A673 (cell line): ENCODE measurements at regions of chr19 and their contacts with region 1.

Region 1: GRCh38 chr19:39362682-39363657 is 20.7 kb downstream of the SAMD4B start:
- DNase-seq: no peak
- H3K4me3 ChIP-seq: no peak overlapping the region
- H3K27ac ChIP-seq: peak overlapping the region; percentile 59
- H3K4me1 ChIP-seq: peaks cover 16% of the 10 kb centered on the region
- H3K27me3 ChIP-seq: no peaks in the 10 kb centered on the region
- CTCF ChIP-seq: no peak

Region 2: DNA sequence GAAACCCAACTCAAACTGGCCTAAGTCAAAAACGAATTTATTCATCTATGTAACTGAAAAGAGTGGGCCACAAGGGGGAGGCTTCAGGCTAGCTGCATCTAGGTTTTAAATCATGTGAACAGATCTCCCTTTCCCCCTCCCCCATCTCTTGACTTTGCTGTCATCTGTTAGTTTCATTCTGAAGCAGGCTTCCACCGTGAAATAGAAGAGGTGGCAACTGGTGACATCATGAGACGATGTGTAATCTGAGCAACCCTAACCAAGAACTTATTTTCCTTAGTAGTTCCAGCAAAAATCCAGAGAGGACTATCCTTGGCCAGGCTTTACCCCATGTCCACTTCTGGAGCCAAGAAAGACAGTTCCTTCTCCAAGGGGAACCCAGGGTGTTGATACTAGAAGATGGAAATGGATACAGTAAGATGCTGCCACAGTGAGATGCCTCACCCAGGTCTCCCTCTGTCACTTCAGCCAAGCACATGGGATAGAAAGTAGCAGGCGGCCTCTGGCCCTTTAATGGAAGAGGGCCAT is 11.4 kb before region 1 on chr19:
- CTCF ChIA-PET with region 1: no interaction called
- POLR2A ChIA-PET with region 1: no interaction called
- intact Hi-C with region 1: no loop called
- DNase-seq: no peak
- H3K4me3 ChIP-seq: no peak overlapping the region
- H3K27ac ChIP-seq: no peak overlapping the region
- H3K4me1 ChIP-seq: peaks cover 11% of the 10 kb centered on the region
- H3K27me3 ChIP-seq: no peaks in the 10 kb centered on the region
- CTCF ChIP-seq: no peak

Region 3: GRCh38 chr19:39524495-39524894 is 161.5 kb after region 1 on chr19:
- CTCF ChIA-PET with region 1: interaction called, 12 read pairs
- POLR2A ChIA-PET with region 1: no interaction called
- intact Hi-C with region 1: no loop called
- DNase-seq: no peak
- H3K4me3 ChIP-seq: no peak overlapping the region
- H3K27ac ChIP-seq: no peak overlapping the region
- H3K4me1 ChIP-seq: no peaks in the 10 kb centered on the region
- H3K27me3 ChIP-seq: no peaks in the 10 kb centered on the region
- CTCF ChIP-seq: no peak